Mammary epithelial cell (primary cell): ENCODE measurements at regions of chr21 and their contacts with region 1.

Region 1: DNA sequence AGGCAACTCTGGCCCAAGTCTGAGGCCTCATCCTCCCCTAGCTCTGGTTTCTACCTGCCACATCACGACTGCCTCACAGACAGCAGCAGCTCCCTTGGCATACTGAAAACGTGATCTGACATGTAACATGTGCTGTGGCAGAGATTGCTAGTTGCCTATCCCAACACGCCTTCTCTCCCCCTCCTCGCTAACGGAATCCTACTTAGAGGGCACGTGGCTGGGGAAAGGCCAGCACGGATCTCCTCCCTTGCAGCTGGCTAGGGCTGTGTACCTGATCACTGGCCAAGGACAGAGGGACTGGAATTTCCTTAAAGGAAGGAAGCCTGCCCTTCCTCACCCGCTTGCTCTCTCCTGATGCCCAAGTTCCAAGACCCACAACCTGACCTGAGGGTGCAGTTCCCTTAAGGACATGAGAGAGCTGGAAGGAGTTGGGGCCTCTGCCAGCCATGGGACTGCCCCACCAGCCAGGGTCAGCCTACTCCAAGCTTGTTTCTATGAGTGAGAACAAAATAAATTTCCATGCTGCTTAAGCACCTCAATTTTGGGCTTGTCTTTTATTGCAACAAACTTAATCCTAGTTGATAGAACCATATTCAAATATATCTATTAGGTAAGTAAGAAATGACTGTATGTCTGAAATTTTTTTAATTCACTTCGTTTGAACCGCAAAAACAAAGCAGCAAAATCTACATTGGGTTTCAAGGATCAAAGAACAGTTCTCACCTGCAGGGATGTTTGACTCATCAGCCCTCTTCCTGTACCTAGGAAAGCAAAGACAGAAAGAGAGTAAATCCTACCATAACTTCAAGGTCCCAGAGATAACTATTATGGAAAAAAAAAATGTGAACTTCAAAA is 7.2 kb downstream of the SETD4 start:
- DNase-seq: no peak
- H3K4me3 ChIP-seq: no peak overlapping the region
- H3K27ac ChIP-seq: no peak overlapping the region
- H3K4me1 ChIP-seq: peaks cover 7% of the 10 kb centered on the region
- H3K27me3 ChIP-seq: no peaks in the 10 kb centered on the region
- CTCF ChIP-seq: no peak

Region 2: GRCh38 chr21:36087362-36088138 is 34.5 kb after region 1 on chr21:
- CTCF ChIA-PET with region 1: no interaction called
- dilution Hi-C with region 1: loop called (anchors 5 kb)
- in situ Hi-C with region 1: no loop called
- intact Hi-C with region 1: no loop called
- DNase-seq: no peak
- H3K4me3 ChIP-seq: no peak overlapping the region
- H3K27ac ChIP-seq: no peak overlapping the region
- H3K4me1 ChIP-seq: peaks cover 37% of the 10 kb centered on the region
- H3K27me3 ChIP-seq: no peaks in the 10 kb centered on the region
- CTCF ChIP-seq: peak in 1 of 2 donors; percentile 12